GM23248 (cell line): ENCODE measurements at regions of chr17 and their contacts with region 1.

Region 1: GRCh38 chr17:45640141-45640850 is 143.8 kb upstream of the CRHR1 start:
- DNase-seq: peak; percentile 78
- H3K4me3 ChIP-seq: no peak overlapping the region
- H3K27ac ChIP-seq: no peak overlapping the region
- H3K4me1 ChIP-seq: peaks cover 7% of the 10 kb centered on the region; the same call in 1 of the 2 replicates
- H3K27me3 ChIP-seq: no peaks in the 10 kb centered on the region

Region 2: GRCh38 chr17:45834471-45835396 is 194.4 kb after region 1 on chr17:
- in situ Hi-C with region 1: loop called (anchors 5 kb)
- DNase-seq: peak; percentile 25
- H3K4me3 ChIP-seq: no peak overlapping the region
- H3K27ac ChIP-seq: no peak overlapping the region
- H3K4me1 ChIP-seq: no peaks in the 10 kb centered on the region
- H3K27me3 ChIP-seq: peaks cover 7% of the 10 kb centered on the region; the same call in 1 of the 2 replicates